ENCODE measurements at regions of chr1 and their contacts with region 1.

Region 1: DNA sequence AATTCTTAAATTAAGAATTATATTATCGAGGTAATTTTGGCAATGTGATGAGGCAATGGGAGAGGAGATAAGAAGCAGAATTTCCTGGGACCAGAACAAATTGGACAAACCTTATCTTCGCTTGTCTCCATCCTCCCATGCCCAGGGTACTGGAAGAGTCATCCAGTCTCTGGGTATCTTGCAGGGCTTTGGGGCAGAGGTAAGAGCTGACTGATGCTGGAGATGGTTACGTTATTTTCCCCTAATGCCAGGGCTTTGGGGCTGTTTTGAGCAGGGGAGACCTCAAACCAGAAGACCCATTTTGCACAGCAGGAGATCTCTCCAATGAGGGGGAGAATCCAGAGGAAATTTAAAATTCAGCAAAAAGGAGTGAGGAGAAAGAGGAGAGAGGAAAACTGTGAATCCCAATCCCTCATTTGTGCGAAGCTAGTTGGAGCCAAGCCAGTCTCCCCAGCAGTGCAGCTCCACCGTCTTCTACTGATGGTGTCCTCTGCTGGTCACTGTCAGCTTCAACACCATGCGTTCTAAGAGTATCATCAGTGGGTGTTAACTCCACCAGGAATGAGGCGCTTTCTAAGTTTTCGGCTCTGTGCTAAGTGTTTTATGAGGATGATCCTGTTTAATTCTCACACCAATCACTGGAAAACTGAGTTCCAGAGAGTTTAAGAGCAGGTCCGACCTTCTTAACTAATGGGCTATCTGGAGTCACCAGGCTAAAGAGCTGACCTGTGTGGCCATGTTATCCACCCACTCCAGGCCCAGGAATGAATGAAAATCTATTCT is 86.8 kb upstream of the CD34 start:
- DNase-seq: peak; percentile 92
- H3K4me3 Mint-ChIP-seq: no peak overlapping the region
- H3K27ac Mint-ChIP-seq: no peak overlapping the region
- H3K4me1 Mint-ChIP-seq: no peaks in the 10 kb centered on the region
- H3K27me3 Mint-ChIP-seq: peaks cover 38% of the 10 kb centered on the region
- CTCF ChIP-seq: peak; percentile 95

Region 2: DNA sequence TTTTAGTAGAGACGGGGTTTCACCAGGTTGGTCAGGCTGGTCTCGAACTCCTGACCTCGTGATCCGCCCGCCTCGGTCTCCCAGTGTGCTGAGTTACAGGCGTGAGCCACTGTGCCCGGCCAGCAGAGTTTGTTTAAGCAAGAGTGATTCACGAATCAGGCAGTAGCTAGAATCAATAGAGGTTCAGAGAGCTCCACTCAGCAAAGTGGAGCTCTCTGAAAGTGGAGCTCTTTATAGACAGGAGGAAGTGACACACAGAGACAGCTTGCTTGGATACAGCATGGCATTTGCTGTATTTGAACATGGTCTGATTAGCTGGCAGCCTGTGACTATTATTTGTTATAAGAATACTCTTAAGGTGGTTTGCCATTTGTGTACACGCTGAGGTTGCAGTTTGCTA is 59.7 kb before region 1 on chr1:
- CTCF ChIA-PET with region 1: no interaction called
- POLR2A ChIA-PET with region 1: no interaction called
- intact Hi-C with region 1: no loop called
- DNase-seq: no peak
- H3K4me3 Mint-ChIP-seq: no peak overlapping the region
- H3K27ac Mint-ChIP-seq: no peak overlapping the region
- H3K4me1 Mint-ChIP-seq: peaks cover 6% of the 10 kb centered on the region
- H3K27me3 Mint-ChIP-seq: no peaks in the 10 kb centered on the region
- CTCF ChIP-seq: no peak

Region 3: GRCh38 chr1:207973898-207974568 is 23.6 kb before region 1 on chr1:
- CTCF ChIA-PET with region 1: interaction called, 31 read pairs
- POLR2A ChIA-PET with region 1: no interaction called
- intact Hi-C with region 1: no loop called
- DNase-seq: no peak
- H3K4me3 Mint-ChIP-seq: no peak overlapping the region
- H3K27ac Mint-ChIP-seq: no peak overlapping the region
- H3K4me1 Mint-ChIP-seq: no peaks in the 10 kb centered on the region
- H3K27me3 Mint-ChIP-seq: peaks cover 42% of the 10 kb centered on the region
- CTCF ChIP-seq: no peak

Region 4: GRCh38 chr1:207987164-207987563 is 10.5 kb before region 1 on chr1:
- CTCF ChIA-PET with region 1: interaction called, 19 read pairs
- POLR2A ChIA-PET with region 1: interaction called, 3 read pairs
- intact Hi-C with region 1: no loop called
- DNase-seq: no peak
- H3K4me3 Mint-ChIP-seq: no peak overlapping the region
- H3K27ac Mint-ChIP-seq: no peak overlapping the region
- H3K4me1 Mint-ChIP-seq: no peaks in the 10 kb centered on the region
- H3K27me3 Mint-ChIP-seq: peaks cover 48% of the 10 kb centered on the region
- CTCF ChIP-seq: no peak

Region 5: GRCh38 chr1:208007938-208008342 is 10.3 kb after region 1 on chr1:
- CTCF ChIA-PET with region 1: interaction called, 69 read pairs
- POLR2A ChIA-PET with region 1: interaction called, 6 read pairs
- intact Hi-C with region 1: no loop called
- DNase-seq: peak; percentile 82
- H3K4me3 Mint-ChIP-seq: no peak overlapping the region
- H3K27ac Mint-ChIP-seq: no peak overlapping the region
- H3K4me1 Mint-ChIP-seq: peaks cover 18% of the 10 kb centered on the region
- H3K27me3 Mint-ChIP-seq: no peaks in the 10 kb centered on the region
- CTCF ChIP-seq: no peak

Region 6: GRCh38 chr1:208015255-208015654 is 17.6 kb after region 1 on chr1:
- CTCF ChIA-PET with region 1: interaction called, 69 read pairs
- POLR2A ChIA-PET with region 1: interaction called, 4 read pairs
- intact Hi-C with region 1: no loop called
- DNase-seq: no peak
- H3K4me3 Mint-ChIP-seq: no peak overlapping the region
- H3K27ac Mint-ChIP-seq: no peak overlapping the region
- H3K4me1 Mint-ChIP-seq: no peaks in the 10 kb centered on the region
- H3K27me3 Mint-ChIP-seq: peaks cover 14% of the 10 kb centered on the region
- CTCF ChIP-seq: no peak

Region 7: DNA sequence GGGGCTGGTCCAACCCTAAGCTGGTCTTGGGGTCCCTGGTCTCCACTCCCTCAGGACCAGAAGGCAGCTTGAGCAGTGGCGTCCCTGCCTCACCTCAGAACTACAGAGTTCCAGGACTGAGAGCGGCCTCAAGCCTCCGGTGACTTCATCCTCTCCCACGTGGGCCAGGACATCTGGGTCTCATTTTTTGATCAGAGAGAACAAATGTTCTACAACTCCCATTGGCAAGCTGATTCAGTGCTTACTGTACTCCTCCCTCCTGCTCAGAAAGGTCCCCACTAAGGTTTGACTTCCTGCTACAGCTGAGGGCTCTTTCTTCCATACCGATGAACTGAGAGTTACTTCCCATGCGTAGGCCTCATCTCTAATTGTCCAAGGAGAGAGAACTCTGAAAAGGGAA is 168.0 kb after region 1 on chr1:
- CTCF ChIA-PET with region 1: no interaction called
- POLR2A ChIA-PET with region 1: no interaction called
- intact Hi-C with region 1: no loop called
- DNase-seq: no peak
- H3K4me3 Mint-ChIP-seq: no peak overlapping the region
- H3K27ac Mint-ChIP-seq: no peak overlapping the region
- H3K4me1 Mint-ChIP-seq: peaks cover 57% of the 10 kb centered on the region
- H3K27me3 Mint-ChIP-seq: no peaks in the 10 kb centered on the region
- CTCF ChIP-seq: no peak

Measured in MCF 10A (cell line).